Calu3 (cell line): ENCODE measurements at regions of chr21 and their contacts with region 1.

Region 1: DNA sequence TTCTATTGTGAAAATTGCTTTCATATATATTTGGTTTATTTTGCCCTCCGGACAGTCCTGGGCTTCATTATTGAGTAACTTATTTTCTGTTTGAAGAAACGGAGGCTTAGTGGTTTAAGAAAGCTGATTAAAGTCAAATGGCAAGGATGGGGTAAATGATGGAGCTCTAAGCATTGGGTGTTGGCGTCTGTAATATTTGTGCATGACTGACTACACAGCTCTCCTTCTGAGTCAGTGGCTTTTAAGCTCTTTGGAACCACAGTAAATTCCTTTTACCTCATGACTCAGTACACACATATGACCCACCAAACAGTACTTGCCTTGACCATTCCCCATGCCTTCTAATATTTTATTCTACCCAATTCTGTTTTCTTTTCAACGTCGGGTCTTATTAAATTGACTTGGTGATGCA is 21.0 kb downstream of the B3GALT5 start:
- DNase-seq: peak; percentile 27
- H3K4me3 Mint-ChIP-seq: peak overlapping the region; percentile 47
- H3K27ac Mint-ChIP-seq: peak overlapping the region; percentile 100
- H3K4me1 Mint-ChIP-seq: peaks cover 88% of the 10 kb centered on the region
- H3K27me3 Mint-ChIP-seq: no peaks in the 10 kb centered on the region
- CTCF ChIP-seq: no peak

Region 2: GRCh38 chr21:39483924-39484323 is 149.9 kb before region 1 on chr21:
- CTCF ChIA-PET with region 1: no interaction called
- intact Hi-C with region 1: no loop called
- DNase-seq: no peak
- H3K4me3 Mint-ChIP-seq: no peak overlapping the region
- H3K27ac Mint-ChIP-seq: no peak overlapping the region
- H3K4me1 Mint-ChIP-seq: no peaks in the 10 kb centered on the region
- H3K27me3 Mint-ChIP-seq: no peaks in the 10 kb centered on the region
- CTCF ChIP-seq: no peak

Region 3: DNA sequence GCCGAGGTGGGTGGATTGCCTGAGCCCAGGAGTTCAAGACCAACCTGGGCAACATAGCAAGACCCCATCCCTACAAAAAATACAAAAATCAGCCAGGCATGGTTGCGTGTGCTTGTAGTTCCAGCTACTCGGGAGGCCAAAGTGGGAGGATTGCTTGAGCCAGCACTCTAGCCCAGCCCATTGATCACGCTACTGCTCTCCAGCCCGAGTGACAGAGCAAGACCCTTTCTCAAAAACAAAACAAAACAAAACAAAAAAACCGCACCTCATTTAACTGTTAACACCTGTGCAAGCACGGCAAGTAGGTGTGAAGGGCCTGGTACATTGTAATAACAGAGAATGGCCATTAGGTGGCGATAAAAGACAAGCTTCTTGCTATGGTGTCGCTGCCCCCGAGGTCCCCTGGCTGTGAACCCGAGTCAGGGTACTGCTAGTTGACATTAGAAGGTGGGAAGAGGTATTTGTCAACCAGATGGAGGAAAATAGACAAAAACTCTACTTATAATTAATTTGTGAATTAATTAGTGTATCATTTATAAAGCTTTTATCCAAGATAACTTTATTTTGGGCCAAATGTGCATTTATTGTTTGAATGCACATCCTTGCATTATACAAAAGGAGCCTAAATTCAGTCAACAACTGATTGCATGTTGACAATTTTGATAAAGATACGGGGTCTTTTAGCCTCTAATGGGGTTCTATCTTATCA is 115.5 kb before region 1 on chr21:
- CTCF ChIA-PET with region 1: interaction called, 3 read pairs
- intact Hi-C with region 1: loop called (anchors 2 kb)
- DNase-seq: peak; percentile 61
- H3K4me3 Mint-ChIP-seq: no peak overlapping the region
- H3K27ac Mint-ChIP-seq: no peak overlapping the region
- H3K4me1 Mint-ChIP-seq: no peaks in the 10 kb centered on the region
- H3K27me3 Mint-ChIP-seq: no peaks in the 10 kb centered on the region
- CTCF ChIP-seq: peak; percentile 87

Region 4: DNA sequence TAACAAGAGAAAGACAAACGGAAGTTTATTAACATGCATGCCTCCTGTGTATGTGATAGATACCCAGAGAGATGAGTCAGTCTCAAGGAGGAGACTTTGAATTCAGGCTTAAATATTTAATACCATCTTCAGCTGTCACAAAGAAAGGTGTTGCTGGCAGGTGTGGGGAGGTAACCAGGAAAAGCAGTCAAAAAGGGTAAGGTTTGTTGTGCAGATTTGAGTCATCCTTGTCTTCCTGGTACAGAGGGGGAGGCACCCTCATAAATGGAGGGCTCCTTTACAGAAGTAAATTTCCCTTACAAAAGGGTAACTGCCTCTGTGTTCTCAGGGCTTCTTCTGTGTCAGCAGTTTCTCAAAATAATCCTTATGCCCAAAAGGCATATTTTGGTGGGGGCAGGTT is 96.2 kb before region 1 on chr21:
- CTCF ChIA-PET with region 1: no interaction called
- intact Hi-C with region 1: loop called (anchors 5 kb)
- DNase-seq: peak; percentile 12
- H3K4me3 Mint-ChIP-seq: no peak overlapping the region
- H3K27ac Mint-ChIP-seq: no peak overlapping the region
- H3K4me1 Mint-ChIP-seq: peaks cover 34% of the 10 kb centered on the region
- H3K27me3 Mint-ChIP-seq: no peaks in the 10 kb centered on the region
- CTCF ChIP-seq: no peak

Region 5: GRCh38 chr21:39669976-39670661 is 36.3 kb after region 1 on chr21:
- CTCF ChIA-PET with region 1: no interaction called
- intact Hi-C with region 1: loop called (anchors 5 kb)
- DNase-seq: no peak
- H3K4me3 Mint-ChIP-seq: no peak overlapping the region
- H3K27ac Mint-ChIP-seq: peak overlapping the region; percentile 92
- H3K4me1 Mint-ChIP-seq: peaks cover 56% of the 10 kb centered on the region
- H3K27me3 Mint-ChIP-seq: no peaks in the 10 kb centered on the region
- CTCF ChIP-seq: no peak

Region 6: GRCh38 chr21:39715804-39716397 is 82.1 kb after region 1 on chr21:
- CTCF ChIA-PET with region 1: no interaction called
- intact Hi-C with region 1: loop called (anchors 2 kb)
- DNase-seq: peak; percentile 60
- H3K4me3 Mint-ChIP-seq: no peak overlapping the region
- H3K27ac Mint-ChIP-seq: no peak overlapping the region
- H3K4me1 Mint-ChIP-seq: peaks cover 13% of the 10 kb centered on the region
- H3K27me3 Mint-ChIP-seq: no peaks in the 10 kb centered on the region
- CTCF ChIP-seq: peak; percentile 51

Region 7: GRCh38 chr21:41258617-41259016 is 1624.8 kb after region 1 on chr21:
- CTCF ChIA-PET with region 1: no interaction called
- intact Hi-C with region 1: no loop called
- DNase-seq: no peak
- H3K4me3 Mint-ChIP-seq: no peak overlapping the region
- H3K27ac Mint-ChIP-seq: no peak overlapping the region
- H3K4me1 Mint-ChIP-seq: no peaks in the 10 kb centered on the region
- H3K27me3 Mint-ChIP-seq: no peaks in the 10 kb centered on the region
- CTCF ChIP-seq: no peak